WTC11 (cell line): ENCODE measurements at regions of chr17 and their contacts with region 1.

Region 1: DNA sequence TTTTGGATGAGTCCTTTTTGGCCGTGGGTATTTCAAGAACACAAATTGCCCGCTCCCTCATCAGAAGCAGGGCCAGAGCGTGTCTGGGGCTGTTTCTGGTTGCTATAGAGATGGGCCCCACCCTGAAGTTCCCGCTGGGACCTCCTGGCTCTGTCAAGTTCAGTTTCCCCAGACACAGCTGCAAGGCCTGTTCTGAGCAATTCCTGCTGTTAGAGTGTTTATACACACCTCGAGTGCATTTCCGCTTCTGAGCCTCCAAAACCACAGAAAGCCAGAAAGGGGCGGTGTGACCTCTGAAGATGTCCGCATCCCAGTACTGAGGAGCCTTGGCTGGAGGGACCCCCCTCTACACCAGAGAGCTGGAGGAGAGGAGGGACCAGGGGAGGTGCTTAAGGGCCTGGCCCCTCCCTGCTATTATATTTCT is 9.3 kb upstream of the WBP2 start:
- DNase-seq: no peak
- ATAC-seq: peak; percentile 92
- H3K4me3 Mint-ChIP-seq: no peak overlapping the region
- H3K27ac Mint-ChIP-seq: peak overlapping the region; percentile 41; the same call in 1 of the 2 replicates
- H3K4me1 Mint-ChIP-seq: peaks cover 18% of the 10 kb centered on the region
- H3K27me3 Mint-ChIP-seq: peaks cover 2% of the 10 kb centered on the region; the same call in 1 of the 2 replicates
- CTCF ChIP-seq: no peak

Region 2: GRCh38 chr17:75667021-75667790 is 197.3 kb before region 1 on chr17 and contains the starts of genes RECQL5 and SAP30BP:
- CTCF ChIA-PET with region 1: no interaction called
- POLR2A ChIA-PET with region 1: no interaction called
- DNase-seq: peak; percentile 96
- ATAC-seq: peak; percentile 100
- H3K4me3 Mint-ChIP-seq: no peak within 1 kb of the TSS
- H3K27ac Mint-ChIP-seq: peak within 1 kb of the TSS; percentile 65; the same call in 1 of the 2 replicates
- H3K4me1 Mint-ChIP-seq: peaks cover 12% of the 10 kb centered on the region
- H3K27me3 Mint-ChIP-seq: no peaks in the 10 kb centered on the region
- CTCF ChIP-seq: no peak
- total RNA-seq, gene RECQL5: 48.9 to 53.1 TPM (median 51.0 TPM) in 3 replicates
- total RNA-seq, gene SAP30BP: 67.5 to 86.8 TPM (median 72.0 TPM) in 3 replicates

Region 3: DNA sequence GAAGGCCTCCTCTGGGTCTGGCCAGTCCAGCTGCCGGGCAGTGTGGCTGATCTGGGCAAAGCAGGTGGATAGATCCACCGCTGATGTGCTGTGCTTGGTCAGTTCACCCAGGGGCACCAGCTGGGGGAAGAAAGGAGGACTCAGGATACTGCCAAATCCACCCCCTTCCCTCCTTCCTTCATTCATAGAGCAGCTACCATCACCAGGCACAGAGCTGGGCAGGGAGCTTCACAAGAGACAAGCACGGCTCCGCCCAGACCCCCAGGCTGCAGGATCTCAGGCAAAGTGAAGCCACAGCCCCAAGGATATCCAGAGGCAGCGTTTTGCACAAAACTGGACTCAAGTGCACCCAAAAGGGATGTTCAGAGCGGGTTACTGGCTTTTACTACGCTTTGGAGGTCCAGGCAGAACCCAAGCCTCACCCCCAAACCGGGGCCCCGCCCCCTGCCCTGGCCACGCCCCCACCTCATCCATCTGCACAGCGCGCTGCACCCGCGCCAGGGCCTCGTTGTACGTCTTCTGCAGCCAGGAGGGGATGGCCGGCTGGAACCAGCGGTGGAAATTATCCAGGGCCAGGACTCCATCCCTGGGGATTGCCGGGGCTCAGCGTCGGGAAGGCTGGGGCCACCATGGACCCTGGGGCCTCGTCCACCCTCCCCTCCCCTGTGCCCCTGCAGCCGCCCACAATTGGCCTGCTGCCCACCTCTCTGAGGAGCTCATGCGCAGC is 29.4 kb before region 1 on chr17:
- CTCF ChIA-PET with region 1: interaction called, 35 read pairs
- POLR2A ChIA-PET with region 1: interaction called, 3 read pairs
- DNase-seq: peak; percentile 66
- ATAC-seq: no peak
- H3K4me3 Mint-ChIP-seq: no peak overlapping the region
- H3K27ac Mint-ChIP-seq: no peak overlapping the region
- H3K4me1 Mint-ChIP-seq: peaks cover 30% of the 10 kb centered on the region
- H3K27me3 Mint-ChIP-seq: no peaks in the 10 kb centered on the region
- CTCF ChIP-seq: no peak

Region 4: DNA sequence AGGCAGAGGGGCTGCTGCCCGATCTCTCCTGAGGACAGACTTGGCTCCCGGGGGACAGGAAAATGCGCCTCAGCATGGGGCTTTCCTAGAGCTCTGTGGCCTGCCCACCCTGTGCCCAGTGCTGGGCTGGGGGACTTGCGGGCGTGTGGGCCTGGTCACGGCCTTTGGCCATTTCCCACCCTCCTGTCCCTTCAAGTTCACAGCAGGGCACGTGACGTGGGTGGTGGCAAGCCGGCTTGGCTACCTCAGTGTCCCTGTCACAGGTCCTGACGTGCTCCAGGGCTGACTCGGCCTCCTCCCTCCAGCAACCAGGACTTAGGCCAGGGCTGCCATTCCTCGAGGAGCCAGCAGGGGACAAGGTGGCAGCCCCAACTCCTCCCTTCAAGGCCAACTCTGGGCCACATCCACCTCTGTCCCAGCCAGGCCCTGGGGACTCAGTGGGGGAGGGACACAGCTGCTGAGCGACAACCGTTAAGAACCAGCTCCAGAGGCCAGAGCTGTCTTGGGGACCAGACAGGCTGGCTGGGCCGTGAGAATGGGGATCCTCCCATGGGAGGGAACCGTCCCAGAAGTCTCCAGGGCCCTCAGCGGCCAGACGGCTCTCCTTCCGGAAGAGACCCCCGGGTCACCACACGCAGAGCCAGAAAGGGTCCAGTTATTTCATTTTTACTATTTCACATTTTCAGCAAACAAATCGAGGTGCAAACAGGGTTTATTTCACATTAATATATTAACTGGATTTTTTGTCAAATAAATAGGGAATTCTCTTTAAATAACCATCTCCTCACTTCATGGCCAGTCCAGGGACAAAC is 19.2 kb before region 1 on chr17:
- CTCF ChIA-PET with region 1: interaction called, 27 read pairs
- POLR2A ChIA-PET with region 1: no interaction called
- DNase-seq: peak; percentile 88
- ATAC-seq: peak; percentile 90
- H3K4me3 Mint-ChIP-seq: no peak overlapping the region
- H3K27ac Mint-ChIP-seq: peak overlapping the region; percentile 90
- H3K4me1 Mint-ChIP-seq: peaks cover 21% of the 10 kb centered on the region
- H3K27me3 Mint-ChIP-seq: no peaks in the 10 kb centered on the region
- CTCF ChIP-seq: peak; percentile 82

Region 5: GRCh38 chr17:75877752-75878173 is 13.3 kb after region 1 on chr17:
- CTCF ChIA-PET with region 1: interaction called, 48 read pairs
- POLR2A ChIA-PET with region 1: no interaction called
- DNase-seq: peak; percentile 81
- ATAC-seq: peak; percentile 81
- H3K4me3 Mint-ChIP-seq: peak overlapping the region; percentile 77
- H3K27ac Mint-ChIP-seq: no peak overlapping the region
- H3K4me1 Mint-ChIP-seq: peaks cover 17% of the 10 kb centered on the region
- H3K27me3 Mint-ChIP-seq: peaks cover 39% of the 10 kb centered on the region
- CTCF ChIP-seq: no peak

Region 6: DNA sequence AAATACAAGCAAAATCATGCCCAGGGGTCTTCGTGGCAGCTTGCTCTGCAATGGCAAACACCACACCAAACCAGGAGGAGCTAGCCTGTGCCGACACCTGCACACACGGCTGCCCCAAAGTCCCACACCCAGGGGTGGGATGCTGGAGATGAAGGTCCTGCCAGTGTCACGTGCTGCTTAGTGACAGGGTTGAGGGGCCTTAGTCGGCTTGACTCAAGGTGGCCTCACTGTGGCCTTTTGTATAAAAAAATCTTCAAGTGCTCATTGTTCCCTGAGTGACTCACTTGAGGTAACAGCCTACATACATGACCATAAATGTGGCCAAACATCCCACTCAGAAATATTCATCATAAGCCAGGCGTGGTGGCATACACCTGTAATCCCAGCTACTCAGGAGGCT is 25.0 kb after region 1 on chr17:
- CTCF ChIA-PET with region 1: interaction called, 36 read pairs
- POLR2A ChIA-PET with region 1: no interaction called
- DNase-seq: no peak
- ATAC-seq: no peak
- H3K4me3 Mint-ChIP-seq: no peak overlapping the region
- H3K27ac Mint-ChIP-seq: no peak overlapping the region
- H3K4me1 Mint-ChIP-seq: peaks cover 8% of the 10 kb centered on the region
- H3K27me3 Mint-ChIP-seq: no peaks in the 10 kb centered on the region
- CTCF ChIP-seq: no peak

Region 7: DNA sequence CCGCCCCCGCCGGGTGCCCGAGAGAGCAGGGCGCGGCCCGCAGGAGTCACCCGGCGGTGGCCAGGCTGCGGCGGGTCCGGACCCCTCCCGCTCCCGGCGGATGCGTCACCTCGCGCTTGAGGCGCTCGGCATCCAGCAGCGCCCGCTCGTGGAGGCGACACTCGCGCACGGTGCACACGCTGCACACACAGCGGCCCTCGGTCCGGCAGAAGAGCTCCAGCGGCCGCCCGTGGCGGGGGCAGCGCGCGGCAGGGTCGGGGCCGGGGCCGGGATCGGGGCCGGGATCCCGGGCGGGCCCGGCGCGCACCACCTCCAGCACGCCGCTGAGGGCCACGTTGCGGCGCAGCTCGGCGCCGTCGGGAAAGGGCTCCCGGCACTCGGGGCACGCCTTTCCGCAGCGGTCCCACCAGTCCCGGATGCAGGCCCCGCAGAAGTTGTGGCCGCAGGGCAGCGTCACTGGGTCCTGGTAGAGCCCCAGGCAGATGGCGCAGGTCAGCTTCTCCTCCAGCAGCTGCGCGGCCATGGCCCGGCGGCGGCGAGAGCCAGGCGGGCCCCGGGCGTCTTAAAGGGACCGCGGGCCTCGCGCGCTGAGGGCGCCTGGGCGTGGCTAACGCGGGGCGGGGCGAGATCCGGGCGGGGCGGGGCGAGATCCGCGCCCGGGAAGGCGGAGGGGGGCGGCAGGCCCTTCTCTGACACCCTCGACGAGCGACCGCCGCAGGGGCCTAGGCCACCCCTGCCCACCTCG is 32.1 kb after region 1 on chr17 and contains the start of gene TRIM65:
- CTCF ChIA-PET with region 1: interaction called, 36 read pairs
- POLR2A ChIA-PET with region 1: no interaction called
- DNase-seq: peak; percentile 73
- ATAC-seq: peak; percentile 60
- H3K4me3 Mint-ChIP-seq: peak within 1 kb of the TSS; percentile 82
- H3K27ac Mint-ChIP-seq: peak within 1 kb of the TSS; percentile 88
- H3K4me1 Mint-ChIP-seq: peaks cover 26% of the 10 kb centered on the region
- H3K27me3 Mint-ChIP-seq: no peaks in the 10 kb centered on the region
- CTCF ChIP-seq: no peak
- total RNA-seq, gene TRIM65: 51.3 to 56.4 TPM (median 51.4 TPM) in 3 replicates